Transverse colon (tissue), 4 donors: ENCODE measurements at regions of chr7 and their contacts with region 1.

Region 1: DNA sequence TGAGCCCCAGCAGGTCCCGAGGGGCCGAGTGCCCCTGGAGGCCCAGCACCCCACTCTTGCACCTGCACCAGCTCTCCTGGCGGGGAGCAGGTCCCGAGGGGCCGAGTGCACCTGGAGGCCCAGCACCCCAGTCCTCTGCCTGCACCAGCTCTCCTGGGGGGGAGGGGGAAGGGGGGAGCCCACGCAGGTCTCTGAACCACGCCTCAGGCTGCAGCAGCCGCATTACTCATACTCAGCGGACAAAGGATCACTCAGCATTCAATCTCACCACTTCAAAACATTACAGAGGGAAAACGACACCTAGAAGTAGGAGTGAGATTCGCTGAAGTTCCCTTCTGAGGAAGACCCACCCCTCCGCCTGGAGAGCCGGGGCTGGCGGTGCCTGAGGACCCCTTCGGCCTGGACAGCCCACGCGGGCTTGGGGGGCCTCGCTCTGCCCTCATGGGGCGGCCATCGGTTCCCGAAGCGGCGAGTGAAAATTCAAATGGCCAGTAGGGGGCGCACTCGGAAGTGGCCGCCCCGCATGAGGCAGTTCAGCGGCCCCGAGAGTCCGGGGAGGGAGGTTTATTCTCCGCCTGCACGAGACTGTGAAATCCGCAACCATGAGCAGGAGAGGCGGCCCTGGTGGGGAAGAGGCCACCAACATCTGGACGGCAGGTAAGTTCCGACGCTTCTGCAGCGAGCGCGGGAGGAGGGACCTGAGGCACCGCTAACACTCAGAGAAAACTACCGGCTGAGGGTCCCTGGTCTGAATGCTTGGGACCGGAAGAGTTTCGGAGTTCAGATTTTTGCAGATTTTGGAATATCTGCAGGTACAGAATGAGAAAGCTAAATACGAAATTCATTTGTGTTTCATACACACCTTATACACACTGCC is 1.1 kb upstream of the GPER1 start:
- DNase-seq: peak; percentile 83
- H3K4me3 ChIP-seq: peak overlapping the region; percentile 11 to 62 (median 32)
- H3K27ac ChIP-seq: peak overlapping the region; percentile 13 to 79 (median 74)
- H3K4me1 ChIP-seq: peaks cover 6 to 40% (median 19%) of the 10 kb centered on the region in 4 donors
- H3K27me3 ChIP-seq: no peaks in the 10 kb centered on the region
- CTCF ChIP-seq: peak; percentile 85 to 95 (median 92)
- EP300 ChIP-seq: no peak
- POLR2A ChIP-seq: no peak

Region 2: GRCh38 chr7:610531-611275 is 476.1 kb before region 1 on chr7:
- in situ Hi-C with region 1: no loop called
- intact Hi-C with region 1: no loop called
- DNase-seq: no peak
- H3K4me3 ChIP-seq: no peak overlapping the region
- H3K27ac ChIP-seq: peak overlapping the region; percentile 17 to 38 (median 28)
- H3K4me1 ChIP-seq: no peaks in the 10 kb centered on the region
- H3K27me3 ChIP-seq: no peaks in the 10 kb centered on the region
- CTCF ChIP-seq: no peak
- EP300 ChIP-seq: no peak
- POLR2A ChIP-seq: no peak

Region 3: GRCh38 chr7:1123715-1124114 is 36.9 kb after region 1 on chr7:
- in situ Hi-C with region 1: no loop called
- intact Hi-C with region 1: loop called (anchors 5 kb)
- DNase-seq: peak; percentile 57
- H3K4me3 ChIP-seq: peak overlapping the region in 1 of 4 donors; percentile 18
- H3K27ac ChIP-seq: peak overlapping the region; percentile 56 to 74 (median 68)
- H3K4me1 ChIP-seq: peaks cover 4 to 9% (median 7%) of the 10 kb centered on the region in 4 donors
- H3K27me3 ChIP-seq: no peaks in the 10 kb centered on the region
- CTCF ChIP-seq: peak; percentile 39 to 55 (median 41)
- EP300 ChIP-seq: no peak
- POLR2A ChIP-seq: no peak

Region 4: DNA sequence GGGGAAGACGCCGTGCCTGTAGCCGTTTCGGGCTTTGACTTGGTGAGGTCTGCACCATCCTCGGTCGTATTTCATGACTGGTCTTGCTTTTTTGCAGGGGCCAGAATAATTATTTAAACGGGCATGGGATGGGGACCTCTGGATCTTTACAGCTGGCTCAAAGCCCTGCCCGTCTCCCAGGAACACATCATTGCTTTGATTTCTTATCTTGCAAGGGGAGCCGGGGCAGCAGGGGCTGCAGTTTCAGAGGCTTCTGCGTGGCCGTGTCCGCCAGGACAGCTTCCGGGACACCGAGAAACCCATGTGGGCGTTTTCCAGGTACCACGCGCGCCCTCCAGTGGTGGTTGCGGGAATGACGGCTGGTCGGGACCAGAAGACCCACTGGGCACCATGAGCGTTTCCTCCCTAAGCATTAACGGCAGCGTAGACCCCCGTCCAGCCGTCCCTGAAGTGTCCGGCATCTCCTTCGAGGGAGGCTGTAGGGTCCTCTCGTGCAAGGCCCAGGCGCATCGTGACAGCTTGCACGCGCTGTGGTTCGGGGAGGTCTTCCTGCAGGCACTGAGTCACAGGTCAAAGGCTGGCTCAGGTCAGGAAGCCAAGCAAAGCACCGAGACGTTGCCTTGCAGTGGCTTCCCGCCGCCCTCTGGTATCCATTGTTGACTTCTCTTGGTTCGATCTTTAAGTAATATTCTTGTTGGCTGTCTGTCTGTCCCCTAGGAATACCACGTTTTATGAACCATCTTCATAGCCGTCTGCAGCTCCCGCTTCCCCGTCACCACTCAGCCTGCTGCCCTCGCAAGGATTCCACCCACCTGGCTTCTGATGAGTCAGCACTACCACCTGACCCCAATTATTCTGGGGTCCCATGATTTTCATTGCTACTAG is 89.4 kb after region 1 on chr7:
- in situ Hi-C with region 1: no loop called
- intact Hi-C with region 1: loop called (anchors 10 kb)
- DNase-seq: peak; percentile 90
- H3K4me3 ChIP-seq: peak overlapping the region in 2 of 4 donors; percentile 13 to 37
- H3K27ac ChIP-seq: peak overlapping the region in 3 of 4 donors; percentile 21 to 47 (median 37)
- H3K4me1 ChIP-seq: peaks cover 6 to 14% (median 10%) of the 10 kb centered on the region in 4 donors
- H3K27me3 ChIP-seq: peaks cover 6% of the 10 kb centered on the region
- CTCF ChIP-seq: peak; percentile 95 to 99 (median 95)
- EP300 ChIP-seq: no peak
- POLR2A ChIP-seq: no peak